MCF 10A (cell line): ENCODE measurements at regions of chr15 and their contacts with region 1.

Region 1: GRCh38 chr15:63504247-63504978 is at the start of gene USP3:
- DNase-seq: peak; percentile 93
- H3K4me3 Mint-ChIP-seq: peak within 1 kb of the TSS; percentile 87
- H3K27ac Mint-ChIP-seq: peak within 1 kb of the TSS; percentile 97
- H3K4me1 Mint-ChIP-seq: peaks cover 43% of the 10 kb centered on the region
- H3K27me3 Mint-ChIP-seq: no peaks in the 10 kb centered on the region
- CTCF ChIP-seq: peak; percentile 40
- total RNA-seq, gene USP3: 59.0 and 70.2 TPM in 2 replicates

Region 2: DNA sequence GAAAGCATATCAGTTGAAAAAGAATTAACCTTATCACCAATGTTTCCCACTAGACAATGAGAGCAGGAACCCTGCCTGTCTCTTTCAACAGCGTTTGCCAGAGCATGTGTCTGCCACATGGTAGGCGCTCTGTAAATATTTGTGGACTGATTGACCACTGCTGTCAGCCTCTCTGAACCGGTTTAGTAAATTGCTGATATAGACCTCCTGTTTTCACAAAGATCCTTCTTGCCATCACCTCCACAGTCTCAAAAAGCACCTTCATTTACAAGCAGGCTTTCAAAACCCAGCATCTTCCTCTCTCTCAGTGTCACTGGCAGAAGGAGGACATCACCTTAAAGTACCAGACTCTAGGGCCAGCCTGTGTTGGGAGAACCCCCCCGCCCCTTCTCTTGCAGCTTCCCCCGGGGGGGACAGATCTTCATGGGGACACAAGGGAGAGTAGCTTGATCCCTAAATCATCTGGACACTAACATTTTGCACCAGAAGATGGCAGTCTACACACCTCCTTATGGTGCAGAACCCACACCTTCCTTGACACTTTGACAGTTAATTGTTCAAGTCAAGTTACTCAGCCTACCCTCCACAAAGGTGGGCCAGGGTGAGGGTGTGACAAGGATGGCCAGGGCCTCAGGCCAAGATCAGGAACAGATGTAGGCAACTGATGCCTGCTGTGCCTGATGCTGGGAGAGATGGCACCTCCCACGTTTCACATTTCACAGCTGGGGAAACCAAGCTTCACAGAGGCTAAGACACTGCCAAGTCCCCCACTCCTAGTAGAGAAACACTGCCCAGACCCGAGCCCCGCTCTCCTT is 37.8 kb before region 1 on chr15:
- CTCF ChIA-PET with region 1: interaction called, 21 read pairs
- POLR2A ChIA-PET with region 1: interaction called, 39 read pairs
- intact Hi-C with region 1: loop called (anchors 1 kb)
- DNase-seq: peak; percentile 82
- H3K4me3 Mint-ChIP-seq: no peak overlapping the region
- H3K27ac Mint-ChIP-seq: no peak overlapping the region
- H3K4me1 Mint-ChIP-seq: no peaks in the 10 kb centered on the region
- H3K27me3 Mint-ChIP-seq: no peaks in the 10 kb centered on the region
- CTCF ChIP-seq: peak; percentile 61

Region 3: GRCh38 chr15:63481105-63481810 is 23.2 kb before region 1 on chr15:
- CTCF ChIA-PET with region 1: interaction called, 13 read pairs
- POLR2A ChIA-PET with region 1: interaction called, 222 read pairs
- intact Hi-C with region 1: loop called (anchors 1 kb)
- DNase-seq: peak; percentile 56
- H3K4me3 Mint-ChIP-seq: no peak overlapping the region
- H3K27ac Mint-ChIP-seq: no peak overlapping the region
- H3K4me1 Mint-ChIP-seq: peaks cover 16% of the 10 kb centered on the region
- H3K27me3 Mint-ChIP-seq: no peaks in the 10 kb centered on the region
- CTCF ChIP-seq: no peak

Region 4: GRCh38 chr15:63514531-63514943 is 10.1 kb after region 1 on chr15:
- CTCF ChIA-PET with region 1: interaction called, 14 read pairs
- POLR2A ChIA-PET with region 1: interaction called, 366 read pairs
- intact Hi-C with region 1: no loop called
- DNase-seq: peak; percentile 93
- H3K4me3 Mint-ChIP-seq: peak overlapping the region; percentile 51
- H3K27ac Mint-ChIP-seq: peak overlapping the region; percentile 94
- H3K4me1 Mint-ChIP-seq: peaks cover 73% of the 10 kb centered on the region
- H3K27me3 Mint-ChIP-seq: no peaks in the 10 kb centered on the region
- CTCF ChIP-seq: no peak

Region 5: GRCh38 chr15:63553388-63553791 is 49.0 kb after region 1 on chr15:
- CTCF ChIA-PET with region 1: interaction called, 7 read pairs
- POLR2A ChIA-PET with region 1: interaction called, 51 read pairs
- intact Hi-C with region 1: loop called (anchors 1 kb)
- DNase-seq: peak; percentile 62
- H3K4me3 Mint-ChIP-seq: peak overlapping the region; percentile 30
- H3K27ac Mint-ChIP-seq: peak overlapping the region; percentile 6
- H3K4me1 Mint-ChIP-seq: peaks cover 22% of the 10 kb centered on the region
- H3K27me3 Mint-ChIP-seq: no peaks in the 10 kb centered on the region
- CTCF ChIP-seq: no peak

Region 6: GRCh38 chr15:63870403-63871209 is 366.2 kb after region 1 on chr15:
- CTCF ChIA-PET with region 1: no interaction called
- POLR2A ChIA-PET with region 1: no interaction called
- intact Hi-C with region 1: no loop called
- DNase-seq: peak; percentile 75
- H3K4me3 Mint-ChIP-seq: no peak overlapping the region
- H3K27ac Mint-ChIP-seq: no peak overlapping the region
- H3K4me1 Mint-ChIP-seq: no peaks in the 10 kb centered on the region
- H3K27me3 Mint-ChIP-seq: peaks cover 11% of the 10 kb centered on the region
- CTCF ChIP-seq: no peak